Naive thymus-derived CD8-positive, alpha-beta T cell (primary cell): ENCODE measurements at regions of chr7 and their contacts with region 1.

Region 1: DNA sequence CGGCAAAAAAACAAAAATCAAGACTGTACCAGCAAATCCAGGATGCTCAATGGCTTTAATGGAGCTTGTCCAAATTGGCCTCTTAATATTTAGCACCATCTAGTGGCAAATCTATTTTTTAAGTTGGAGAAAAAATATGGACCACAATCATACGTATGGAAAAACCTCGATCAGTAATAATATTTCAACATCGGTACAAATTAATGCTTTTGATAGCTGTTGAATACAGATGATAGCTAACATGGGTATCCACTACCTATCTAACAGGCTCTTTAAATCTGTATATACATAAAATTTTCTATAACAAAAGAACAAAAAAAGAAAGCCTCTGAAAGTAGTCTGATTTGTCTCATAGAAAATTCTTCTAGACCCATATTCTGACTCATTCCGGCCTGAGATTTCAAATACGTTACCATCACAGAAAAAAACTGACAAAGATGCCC is 29.2 kb downstream of the COA1 start:
- DNase-seq: peak in 4 of 10 donors; percentile 7 to 78 (median 71)
- ATAC-seq: peak; percentile 61 to 75
- H3K4me3 Mint-ChIP-seq: peak overlapping the region; percentile 40 to 78 (median 58)
- H3K27ac Mint-ChIP-seq: peak overlapping the region; percentile 54 to 88 (median 84)
- H3K4me1 Mint-ChIP-seq: peaks cover 20 to 49% (median 42%) of the 10 kb centered on the region in 4 donors
- H3K27me3 Mint-ChIP-seq: no peaks in the 10 kb centered on the region

Region 2: DNA sequence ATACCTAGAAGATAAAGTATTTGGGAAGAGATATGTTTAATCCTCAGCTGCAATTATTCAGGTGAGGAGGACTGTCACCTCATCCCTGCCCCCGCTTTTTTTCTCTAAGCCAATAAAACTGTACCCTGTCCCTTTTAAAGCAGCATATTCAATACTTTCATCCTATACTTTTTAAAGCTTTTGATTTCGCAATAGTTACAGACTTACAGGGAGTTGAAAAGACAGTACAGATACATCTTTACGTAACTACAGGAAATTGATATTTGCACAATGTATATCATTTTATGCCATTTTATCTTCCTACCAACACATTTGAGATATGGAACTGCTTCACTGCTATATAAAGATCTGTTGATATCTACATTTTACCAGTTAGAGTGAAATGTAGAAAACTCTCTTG is 69.6 kb before region 1 on chr7:
- POLR2A ChIA-PET with region 1: interaction called, 14 read pairs
- DNase-seq: no peak
- ATAC-seq: no peak
- H3K4me3 Mint-ChIP-seq: peak overlapping the region; percentile 13 to 83 (median 73)
- H3K27ac Mint-ChIP-seq: peak overlapping the region in 9 of 10 donors; percentile 91 to 99 (median 95)
- H3K4me1 Mint-ChIP-seq: peaks cover 45 to 94% (median 94%) of the 10 kb centered on the region in 4 donors
- H3K27me3 Mint-ChIP-seq: peaks cover 0 to under 1% (median 0%) of the 10 kb centered on the region in 5 donors

Region 3: GRCh38 chr7:43680736-43681135 is 19.3 kb before region 1 on chr7:
- POLR2A ChIA-PET with region 1: no interaction called
- DNase-seq: no peak
- ATAC-seq: no peak
- H3K4me3 Mint-ChIP-seq: peak overlapping the region in 1 of 10 donors; percentile 1
- H3K27ac Mint-ChIP-seq: peak overlapping the region; percentile 2 to 94 (median 82)
- H3K4me1 Mint-ChIP-seq: peaks cover 35 to 87% (median 76%) of the 10 kb centered on the region in 4 donors
- H3K27me3 Mint-ChIP-seq: no peaks in the 10 kb centered on the region